Left ventricle myocardium superior (tissue), 1 donor: ENCODE measurements at regions of chr17 and their contacts with region 1.

Region 1: GRCh38 chr17:7862692-7863437 is 5.1 kb downstream of the CYB5D1 start:
- DNase-seq: no peak
- ATAC-seq: no peak

Region 2: GRCh38 chr17:7729816-7730215 is 133.0 kb before region 1 on chr17:
- intact Hi-C with region 1: loop called (anchors 10 kb)
- DNase-seq: no peak
- ATAC-seq: no peak

Region 3: DNA sequence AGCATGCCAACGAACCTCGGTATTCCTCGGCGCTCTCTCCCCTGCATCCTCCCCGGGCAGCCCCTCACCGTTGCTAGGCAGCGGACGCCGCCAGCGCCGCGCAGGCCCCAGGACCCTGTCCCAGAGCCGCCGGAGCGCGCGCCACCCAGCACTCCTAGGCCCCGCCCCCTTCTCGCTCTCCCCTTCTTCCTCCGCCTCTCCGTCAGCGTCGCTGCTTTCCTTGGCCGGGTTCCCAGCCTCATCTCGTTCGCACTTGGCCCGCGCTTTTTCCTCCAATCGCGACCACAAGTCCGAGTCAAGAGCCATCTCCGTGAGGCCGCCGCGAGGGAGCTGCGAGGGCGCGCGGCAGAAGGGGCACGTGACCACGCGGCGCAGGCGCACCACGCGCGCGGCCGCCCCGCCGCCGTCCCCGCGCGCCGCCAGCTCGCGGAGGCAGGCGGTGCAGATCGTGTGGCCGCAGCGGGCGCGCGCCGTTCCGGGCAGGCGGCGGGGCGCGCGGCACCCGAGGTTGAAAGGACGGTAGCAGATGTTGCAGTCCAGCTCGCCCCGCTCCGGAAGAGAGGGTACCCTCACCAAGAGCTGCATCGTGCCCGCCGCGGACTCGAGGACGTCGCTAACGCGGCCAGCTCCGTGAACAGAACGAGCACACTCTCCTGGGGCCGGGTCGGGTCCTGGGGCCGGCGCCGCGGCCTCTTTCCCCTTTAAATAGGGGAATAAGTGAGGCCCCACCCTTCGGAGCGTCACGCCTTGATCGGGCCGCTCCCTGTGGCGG is 52.9 kb after region 1 on chr17 and contains the start of gene RNF227:
- intact Hi-C with region 1: loop called (anchors 10 kb)
- DNase-seq: peak; percentile 94
- ATAC-seq: peak; percentile 93
- total RNA-seq, gene RNF227: 1.1 TPM

Region 4: DNA sequence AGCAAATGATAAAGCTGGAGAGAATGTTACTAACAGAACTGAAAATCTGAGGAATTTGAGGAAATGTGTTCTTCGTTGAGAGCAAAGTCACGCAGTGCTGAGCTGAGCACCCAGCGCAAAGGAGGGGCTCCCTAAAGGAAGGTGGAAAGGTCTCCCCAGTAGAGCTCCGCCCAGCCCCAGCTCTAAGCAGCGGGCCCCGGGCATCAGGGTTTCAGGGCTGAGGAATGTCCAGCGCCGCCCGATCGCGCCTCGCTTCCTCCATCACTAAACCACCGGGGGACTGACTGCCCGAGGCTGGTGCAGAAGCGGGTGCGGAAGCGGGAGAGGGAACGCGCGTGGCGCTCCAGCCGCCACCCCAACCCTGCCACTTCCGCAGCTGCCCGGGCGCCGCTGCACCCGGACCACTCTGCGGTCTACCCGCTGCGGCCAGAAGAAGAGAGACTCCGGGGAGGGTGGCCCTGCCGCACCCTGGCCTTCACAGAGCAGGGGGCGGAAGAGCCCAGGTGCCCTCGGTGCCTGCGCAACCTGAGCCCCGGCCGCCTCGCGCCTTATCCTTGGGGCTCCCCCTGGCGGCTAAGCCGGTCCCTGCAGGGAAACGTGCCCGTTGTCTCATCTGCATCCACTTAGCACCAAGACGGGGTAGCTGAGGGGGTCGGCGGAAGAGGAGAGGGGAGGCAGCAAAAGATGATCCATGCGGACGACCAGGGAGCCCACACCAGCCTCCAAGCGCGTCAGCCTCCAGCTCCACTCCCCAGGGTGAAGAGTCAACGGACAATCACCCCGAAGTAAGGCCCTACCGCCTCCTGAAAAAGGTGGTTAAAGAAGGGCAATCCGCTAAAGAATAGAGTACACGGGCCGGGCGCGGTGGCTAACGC is 127.2 kb after region 1 on chr17:
- intact Hi-C with region 1: loop called (anchors 10 kb)
- DNase-seq: peak; percentile 91
- ATAC-seq: peak; percentile 91